ENCODE measurements at regions of chr10 and their contacts with region 1.

Region 1: GRCh38 chr10:91604553-91605534 is 28.0 kb downstream of the PPP1R3C start:
- DNase-seq: no peak
- ATAC-seq: no peak
- H3K4me3 ChIP-seq: no peak overlapping the region
- H3K27ac ChIP-seq: no peak overlapping the region
- H3K4me1 ChIP-seq: peaks cover 7 to 23% of the 10 kb centered on the region in 2 experiments; a peak in 4 of 5 replicates
- H3K27me3 ChIP-seq: no peaks in the 10 kb centered on the region
- CTCF ChIP-seq: no peak
- EP300 ChIP-seq: no peak
- POLR2A ChIP-seq: no peak
- RAD21 ChIP-seq: no peak

Region 2: GRCh38 chr10:91564508-91564907 is 40.3 kb before region 1 on chr10:
- CTCF ChIA-PET with region 1: no interaction called
- POLR2A ChIA-PET with region 1: no interaction called
- in situ Hi-C with region 1: no loop called
- intact Hi-C with region 1: loop called (anchors 5 kb)
- DNase-seq: peak in 1 of 4 experiments; percentile 50
- ATAC-seq: peak; percentile 64
- H3K4me3 ChIP-seq: no peak overlapping the region
- H3K27ac ChIP-seq: no peak overlapping the region
- H3K4me1 ChIP-seq: peaks cover 0 to 9% of the 10 kb centered on the region in 2 experiments; a peak in 4 of 5 replicates
- H3K27me3 ChIP-seq: no peaks in the 10 kb centered on the region
- CTCF ChIP-seq: no peak
- EP300 ChIP-seq: no peak; the same call in 1 of the 2 replicates
- POLR2A ChIP-seq: no peak
- RAD21 ChIP-seq: no peak

Region 3: GRCh38 chr10:91590142-91590903 is 14.5 kb before region 1 on chr10:
- CTCF ChIA-PET with region 1: no interaction called
- POLR2A ChIA-PET with region 1: interaction called, 6 read pairs
- in situ Hi-C with region 1: no loop called
- intact Hi-C with region 1: loop called (anchors 1 kb)
- DNase-seq: no peak
- ATAC-seq: peak; percentile 40
- H3K4me3 ChIP-seq: no peak overlapping the region
- H3K27ac ChIP-seq: peak overlapping the region; percentile 64
- H3K4me1 ChIP-seq: peaks cover 23 to 59% of the 10 kb centered on the region in 2 experiments
- H3K27me3 ChIP-seq: no peaks in the 10 kb centered on the region
- CTCF ChIP-seq: no peak
- EP300 ChIP-seq: no peak
- POLR2A ChIP-seq: no peak
- RAD21 ChIP-seq: no peak